Heart left ventricle (tissue), 16 donors: ENCODE measurements at regions of chr6 and their contacts with region 1.

Region 1: GRCh38 chr6:31680840-31681671 is at the start of gene LY6G5C:
- DNase-seq: peak; percentile 82 to 90 (median 85)
- ATAC-seq: peak; percentile 75 to 92 (median 88)
- H3K4me3 ChIP-seq: peak within 1 kb of the TSS; percentile 28 to 74 (median 58)
- H3K27ac ChIP-seq: peak within 1 kb of the TSS in 11 of 12 donors; percentile 9 to 83 (median 63)
- H3K4me1 ChIP-seq: peaks cover 0 to 26% (median 14%) of the 10 kb centered on the region in 12 donors
- H3K27me3 ChIP-seq: no peaks in the 10 kb centered on the region
- CTCF ChIP-seq: peak; percentile 54 to 85 (median 78)
- POLR2A ChIP-seq: no peak
- total RNA-seq, gene LY6G5C: 1.3 to 3.1 (median 2.2) TPM

Region 2: DNA sequence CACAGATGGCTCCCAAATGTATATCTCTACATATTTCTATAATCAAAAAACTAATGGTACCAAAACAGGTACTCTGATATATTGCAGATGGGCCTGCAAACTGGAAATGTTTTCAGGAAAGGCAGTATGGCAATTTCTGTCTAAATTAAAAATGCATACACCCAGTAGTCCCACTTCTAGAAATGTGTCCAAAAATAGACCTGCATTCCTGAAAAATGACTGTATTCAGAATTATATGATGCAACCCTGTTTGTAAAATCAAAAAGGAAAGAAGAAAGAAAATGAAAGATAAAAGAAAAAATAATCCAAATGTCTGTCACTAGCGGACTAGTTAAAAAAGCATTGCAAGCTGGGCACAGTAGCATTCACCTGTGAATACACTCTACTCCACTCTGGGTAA is 196.0 kb before region 1 on chr6:
- intact Hi-C with region 1: no loop called
- DNase-seq: no peak
- ATAC-seq: no peak
- H3K4me3 ChIP-seq: no peak overlapping the region
- H3K27ac ChIP-seq: no peak overlapping the region
- H3K4me1 ChIP-seq: no peaks in the 10 kb centered on the region
- H3K27me3 ChIP-seq: peaks cover 0 to 4% (median 0%) of the 10 kb centered on the region in 9 donors
- CTCF ChIP-seq: no peak
- POLR2A ChIP-seq: no peak

Region 3: GRCh38 chr6:31497531-31498476 is 183.3 kb before region 1 on chr6 and contains the start of gene MICB:
- intact Hi-C with region 1: no loop called
- DNase-seq: peak; percentile 65 to 81 (median 75)
- ATAC-seq: peak; percentile 8 to 71 (median 66)
- H3K4me3 ChIP-seq: peak within 1 kb of the TSS; percentile 33 to 75 (median 60)
- H3K27ac ChIP-seq: peak within 1 kb of the TSS in 7 of 12 donors; percentile 8 to 62 (median 39)
- H3K4me1 ChIP-seq: peaks cover 0 to 42% (median 10%) of the 10 kb centered on the region in 12 donors
- H3K27me3 ChIP-seq: peaks cover 0 to 11% (median 0%) of the 10 kb centered on the region in 9 donors
- CTCF ChIP-seq: no peak
- POLR2A ChIP-seq: peak in 1 of 2 donors; percentile 60
- total RNA-seq, gene MICB: 1.1 to 8.8 (median 1.5) TPM

Region 4: GRCh38 chr6:31717499-31718222 is 36.6 kb after region 1 on chr6:
- intact Hi-C with region 1: no loop called
- DNase-seq: no peak
- ATAC-seq: no peak
- H3K4me3 ChIP-seq: no peak overlapping the region
- H3K27ac ChIP-seq: no peak overlapping the region
- H3K4me1 ChIP-seq: no peaks in the 10 kb centered on the region
- H3K27me3 ChIP-seq: no peaks in the 10 kb centered on the region
- CTCF ChIP-seq: no peak
- POLR2A ChIP-seq: no peak

Region 5: GRCh38 chr6:31729515-31729978 is 48.5 kb after region 1 on chr6:
- intact Hi-C with region 1: loop called in 3 of 10 experiments (anchors 5 kb)
- DNase-seq: peak; percentile 93 to 95 (median 93)
- ATAC-seq: peak; percentile 89 to 91 (median 89)
- H3K4me3 ChIP-seq: peak overlapping the region; percentile 52 to 95 (median 76)
- H3K27ac ChIP-seq: peak overlapping the region; percentile 70 to 99 (median 97)
- H3K4me1 ChIP-seq: peaks cover 4 to 85% (median 33%) of the 10 kb centered on the region in 12 donors
- H3K27me3 ChIP-seq: no peaks in the 10 kb centered on the region
- CTCF ChIP-seq: peak in 7 of 12 donors; percentile 36 to 76 (median 54)
- POLR2A ChIP-seq: peak in 1 of 2 donors; percentile 57

Region 6: GRCh38 chr6:31763619-31763940 is 82.5 kb after region 1 on chr6:
- intact Hi-C with region 1: loop called in 3 of 10 experiments (anchors 5 to 10 kb)
- DNase-seq: peak in 1 of 5 donors; percentile 34
- ATAC-seq: peak in 3 of 4 donors; percentile 55 to 77 (median 57)
- H3K4me3 ChIP-seq: no peak overlapping the region
- H3K27ac ChIP-seq: peak overlapping the region in 1 of 12 donors; percentile 47
- H3K4me1 ChIP-seq: peaks cover 0 to 21% (median 6%) of the 10 kb centered on the region in 12 donors
- H3K27me3 ChIP-seq: no peaks in the 10 kb centered on the region
- CTCF ChIP-seq: peak in 1 of 12 donors; percentile 11
- POLR2A ChIP-seq: no peak

Region 7: DNA sequence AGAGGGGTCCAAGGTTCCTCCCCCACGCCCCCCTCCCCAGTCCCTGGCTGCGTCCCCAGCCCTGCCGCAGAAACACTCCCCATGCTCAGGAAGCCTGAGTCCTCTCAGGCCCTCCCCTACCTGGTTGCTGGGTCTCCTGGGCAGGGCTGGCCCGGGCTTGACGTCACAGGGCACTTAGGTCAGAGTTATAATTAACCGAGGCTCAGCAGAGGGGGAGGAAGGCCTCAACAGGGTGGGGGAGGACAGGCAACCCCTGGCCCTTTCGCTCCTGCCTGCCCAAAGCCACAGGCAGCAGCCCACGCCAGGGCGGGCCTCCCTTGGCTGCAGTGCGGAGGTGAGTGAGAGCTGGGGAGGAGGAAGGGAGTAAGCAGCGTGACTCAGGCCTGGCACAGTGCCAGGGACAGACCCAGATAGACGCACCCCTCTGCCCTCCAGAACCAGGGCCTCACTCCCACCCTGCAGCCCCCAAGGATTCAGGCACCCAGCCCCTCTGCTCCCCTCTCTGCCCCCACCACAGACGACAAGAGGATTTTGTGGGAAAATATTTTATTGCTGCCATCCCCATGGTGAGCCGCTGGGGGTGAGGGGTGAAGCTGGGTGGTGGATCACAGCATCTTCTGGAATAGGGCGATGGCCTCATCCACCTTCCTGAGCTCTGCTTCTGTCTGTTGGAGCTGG is 96.1 kb after region 1 on chr6 and contains the start of gene VWA7:
- intact Hi-C with region 1: loop called in 3 of 10 experiments (anchors 2 to 5 kb)
- DNase-seq: peak; percentile 73 to 90 (median 78)
- ATAC-seq: peak; percentile 85 to 93 (median 88)
- H3K4me3 ChIP-seq: peak within 1 kb of the TSS in 10 of 12 donors; percentile 13 to 49 (median 38)
- H3K27ac ChIP-seq: peak within 1 kb of the TSS in 11 of 12 donors; percentile 38 to 85 (median 79)
- H3K4me1 ChIP-seq: peaks cover 0 to 22% (median 13%) of the 10 kb centered on the region in 12 donors
- H3K27me3 ChIP-seq: no peaks in the 10 kb centered on the region
- CTCF ChIP-seq: no peak
- POLR2A ChIP-seq: peak in 1 of 2 donors; percentile 49
- total RNA-seq, gene VWA7: 8.0 to 25.8 (median 16.1) TPM

Region 8: GRCh38 chr6:31862344-31863227 is 181.5 kb after region 1 on chr6 and contains the start of gene NEU1:
- intact Hi-C with region 1: loop called in 1 of 10 experiments (anchors 10 kb)
- DNase-seq: peak; percentile 100
- ATAC-seq: peak; percentile 98 to 99 (median 98)
- H3K4me3 ChIP-seq: peak within 1 kb of the TSS; percentile 62 to 91 (median 76)
- H3K27ac ChIP-seq: peak within 1 kb of the TSS; percentile 38 to 90 (median 84)
- H3K4me1 ChIP-seq: peaks cover 0 to 24% (median 16%) of the 10 kb centered on the region in 12 donors
- H3K27me3 ChIP-seq: no peaks in the 10 kb centered on the region
- CTCF ChIP-seq: no peak
- POLR2A ChIP-seq: peak; percentile 88 to 99
- total RNA-seq, gene NEU1: 18.7 to 39.5 (median 27.6) TPM

Region 9: DNA sequence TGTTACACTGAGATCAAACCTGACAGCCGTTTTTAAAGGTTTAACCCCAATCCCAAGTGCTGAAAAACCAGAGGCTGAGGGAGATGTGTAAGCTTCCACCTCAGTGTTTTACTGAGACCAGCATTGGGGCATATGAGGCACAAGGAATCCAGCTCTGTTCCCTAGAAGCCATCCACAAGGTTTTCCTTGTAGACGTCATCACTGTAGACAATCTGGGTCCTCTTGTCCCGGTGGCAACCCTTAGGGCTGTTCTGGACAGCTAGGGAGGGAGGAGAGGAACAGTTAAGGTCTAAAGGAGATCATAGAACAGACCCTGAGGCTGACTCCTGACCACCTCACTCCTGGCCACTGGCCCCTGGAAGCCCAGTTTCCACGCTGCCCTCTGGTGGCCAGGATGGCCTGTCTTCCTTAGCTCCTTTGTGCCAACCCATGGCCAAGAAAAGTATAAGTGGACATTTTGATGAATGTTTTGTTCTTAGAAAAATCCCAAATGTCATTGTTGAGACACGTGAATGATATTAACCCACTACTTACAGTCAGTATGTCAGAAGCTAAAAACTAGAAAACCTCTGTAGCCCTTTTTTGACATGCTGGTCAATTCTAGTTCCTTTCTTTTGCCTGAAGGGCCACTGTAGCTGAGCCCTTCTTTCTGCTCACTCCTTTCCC is 271.2 kb after region 1 on chr6:
- intact Hi-C with region 1: loop called in 9 of 10 experiments (anchors 1 to 10 kb)
- DNase-seq: peak in 4 of 5 donors; percentile 49 to 73 (median 61)
- ATAC-seq: peak in 3 of 4 donors; percentile 40 to 68 (median 66)
- H3K4me3 ChIP-seq: no peak overlapping the region
- H3K27ac ChIP-seq: peak overlapping the region in 2 of 12 donors; percentile 19 to 21
- H3K4me1 ChIP-seq: peaks cover 0 to 3% (median 0%) of the 10 kb centered on the region in 12 donors
- H3K27me3 ChIP-seq: no peaks in the 10 kb centered on the region
- CTCF ChIP-seq: peak; percentile 55 to 79 (median 70)
- POLR2A ChIP-seq: no peak